Activated naive CD4-positive, alpha-beta T cell treated with anti-CD3 and anti-CD28 coated beads for 36 hours (primary cell): ENCODE measurements at regions of chr13 and their contacts with region 1.

Region 1: DNA sequence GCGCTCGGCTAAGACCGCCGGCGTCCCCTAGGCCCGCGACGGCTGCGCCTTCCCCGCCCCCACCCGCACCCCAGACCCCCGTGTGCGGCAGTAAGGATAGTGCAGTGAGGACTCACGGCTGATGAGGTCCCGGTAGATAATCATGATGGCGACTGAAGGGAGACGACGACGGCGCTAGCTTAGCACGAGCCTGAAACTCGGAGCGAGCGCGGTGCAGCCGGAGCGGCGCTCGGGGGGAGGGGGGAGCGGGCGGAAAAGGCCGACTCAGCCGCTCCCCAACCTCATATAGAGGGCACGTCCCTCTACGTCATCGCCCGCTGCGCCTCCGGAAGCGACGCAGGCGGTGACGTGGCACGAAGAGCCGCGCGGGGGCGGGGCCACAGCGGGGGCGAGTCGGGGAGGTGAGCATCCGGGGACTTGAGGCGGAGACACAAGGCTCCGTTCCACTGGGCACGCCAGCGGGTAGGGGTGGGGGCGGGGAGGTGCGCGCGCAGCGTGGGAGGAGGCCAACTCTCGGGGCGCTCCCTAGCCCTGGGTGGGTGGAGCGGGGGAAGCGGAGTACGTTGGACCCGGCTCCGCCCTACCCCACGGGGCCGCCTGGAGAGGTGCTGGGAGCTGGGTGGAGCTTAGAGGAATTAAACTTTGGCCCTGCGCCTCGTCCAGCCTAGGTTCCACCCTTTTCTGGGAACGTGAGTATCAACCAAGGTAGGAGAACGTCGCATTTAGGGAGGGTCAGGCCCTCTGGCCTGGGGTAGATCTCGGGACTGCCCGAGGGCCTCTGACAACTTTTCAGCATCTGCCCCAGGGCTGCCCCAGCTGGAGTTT is at the start of gene TPT1:
- DNase-seq: peak; percentile 100
- H3K4me3 Mint-ChIP-seq: peak within 1 kb of the TSS; percentile 91
- H3K27ac Mint-ChIP-seq: peak within 1 kb of the TSS; percentile 99
- H3K4me1 Mint-ChIP-seq: peaks cover 43% of the 10 kb centered on the region
- H3K27me3 Mint-ChIP-seq: no peaks in the 10 kb centered on the region
- total RNA-seq, gene TPT1: 3,331 to 3,631 TPM

Region 2: GRCh38 chr13:44988973-44989817 is 351.9 kb before region 1 on chr13 and contains the starts of genes GPALPP1 and NUFIP1:
- CTCF ChIA-PET with region 1: no interaction called
- intact Hi-C with region 1: loop called (anchors 1 kb)
- DNase-seq: peak; percentile 98
- H3K4me3 Mint-ChIP-seq: peak within 1 kb of the TSS; percentile 98
- H3K27ac Mint-ChIP-seq: peak within 1 kb of the TSS; percentile 88
- H3K4me1 Mint-ChIP-seq: peaks cover 60% of the 10 kb centered on the region
- H3K27me3 Mint-ChIP-seq: no peaks in the 10 kb centered on the region
- total RNA-seq, gene GPALPP1: 25.0 to 26.9 TPM
- total RNA-seq, gene NUFIP1: 7.2 to 8.9 TPM

Region 3: DNA sequence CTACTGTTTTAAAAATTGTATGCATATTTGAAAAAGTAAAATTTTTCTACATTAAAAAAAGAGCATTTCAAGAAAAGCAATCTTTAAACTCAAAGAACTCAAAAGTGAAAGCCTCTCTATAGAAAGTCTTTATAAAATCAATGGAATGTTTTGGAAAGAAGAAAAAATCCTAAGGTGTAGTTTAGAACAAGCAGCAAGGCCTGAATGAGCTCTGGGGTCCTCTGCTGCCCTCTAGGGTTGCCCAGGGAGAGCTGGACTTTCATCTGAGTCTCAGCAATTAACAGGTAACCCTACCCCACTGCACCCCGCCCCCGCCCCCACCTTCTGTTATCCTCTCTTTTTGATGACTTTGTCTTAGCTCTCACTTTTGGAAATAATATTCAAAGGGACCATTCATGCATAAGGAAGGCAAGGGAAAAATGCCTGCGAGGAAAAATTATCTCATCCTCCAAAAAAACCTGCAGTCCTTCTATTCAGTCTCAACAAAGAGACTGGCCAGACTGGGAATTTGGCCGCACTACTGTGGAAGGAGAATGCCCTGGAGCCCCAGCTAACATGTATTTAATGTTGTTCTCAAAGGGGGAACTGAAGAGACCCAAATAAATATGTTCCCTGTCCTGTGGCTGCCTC is 52.9 kb after region 1 on chr13:
- CTCF ChIA-PET with region 1: interaction called, 5 read pairs
- intact Hi-C with region 1: loop called (anchors 1 kb)
- DNase-seq: peak; percentile 61
- H3K4me3 Mint-ChIP-seq: no peak overlapping the region
- H3K27ac Mint-ChIP-seq: no peak overlapping the region
- H3K4me1 Mint-ChIP-seq: peaks cover 47% of the 10 kb centered on the region
- H3K27me3 Mint-ChIP-seq: no peaks in the 10 kb centered on the region

Region 4: GRCh38 chr13:45417790-45418534 is 76.8 kb after region 1 on chr13 and contains the start of gene SLC25A30:
- CTCF ChIA-PET with region 1: no interaction called
- intact Hi-C with region 1: loop called (anchors 1 kb)
- DNase-seq: peak; percentile 89
- H3K4me3 Mint-ChIP-seq: peak within 1 kb of the TSS; percentile 94
- H3K27ac Mint-ChIP-seq: peak within 1 kb of the TSS; percentile 92
- H3K4me1 Mint-ChIP-seq: peaks cover 24% of the 10 kb centered on the region
- H3K27me3 Mint-ChIP-seq: no peaks in the 10 kb centered on the region
- total RNA-seq, gene SLC25A30: 13.6 to 15.1 TPM

Region 5: DNA sequence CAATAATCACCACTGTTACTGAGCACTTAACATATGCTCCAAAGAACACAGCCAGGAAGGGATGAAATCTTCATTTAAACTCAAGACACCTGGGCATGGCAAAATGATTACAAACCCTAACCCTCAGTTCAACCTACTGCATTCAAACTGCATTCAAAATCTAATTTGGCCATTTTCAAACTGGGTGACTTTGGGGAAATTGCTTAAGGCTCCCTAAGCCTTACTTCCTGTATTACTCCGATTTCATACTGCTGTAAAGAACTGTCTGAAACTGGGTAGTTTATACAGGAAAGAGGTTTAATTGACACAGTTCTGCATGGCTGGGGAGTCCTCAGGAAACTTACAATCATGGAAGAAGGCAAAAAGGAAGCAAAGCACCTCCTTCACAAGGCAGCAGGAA is 411.4 kb after region 1 on chr13:
- CTCF ChIA-PET with region 1: no interaction called
- intact Hi-C with region 1: no loop called
- DNase-seq: no peak
- H3K4me3 Mint-ChIP-seq: no peak overlapping the region
- H3K27ac Mint-ChIP-seq: no peak overlapping the region
- H3K4me1 Mint-ChIP-seq: no peaks in the 10 kb centered on the region
- H3K27me3 Mint-ChIP-seq: no peaks in the 10 kb centered on the region